ENCODE measurements at regions of chr1 and their contacts with region 1.

Region 1: GRCh38 chr1:100132566-100133477 is at the starts of genes SASS6 and TRMT13:
- DNase-seq: peak; percentile 94
- H3K4me3 Mint-ChIP-seq: peak within 1 kb of the TSS; percentile 97
- H3K27ac Mint-ChIP-seq: peak within 1 kb of the TSS; percentile 93
- H3K4me1 Mint-ChIP-seq: peaks cover 31% of the 10 kb centered on the region
- H3K27me3 Mint-ChIP-seq: no peaks in the 10 kb centered on the region
- total RNA-seq, gene SASS6: 15.2 and 15.7 TPM in 2 replicates
- total RNA-seq, gene TRMT13: 20.2 and 24.6 TPM in 2 replicates

Region 2: GRCh38 chr1:99849744-99850458 is 282.9 kb before region 1 on chr1 and contains the start of gene AGL:
- intact Hi-C with region 1: loop called (anchors 5 kb)
- DNase-seq: peak; percentile 81
- H3K4me3 Mint-ChIP-seq: peak within 1 kb of the TSS; percentile 96
- H3K27ac Mint-ChIP-seq: peak within 1 kb of the TSS; percentile 80
- H3K4me1 Mint-ChIP-seq: peaks cover 23% of the 10 kb centered on the region
- H3K27me3 Mint-ChIP-seq: no peaks in the 10 kb centered on the region
- total RNA-seq, gene AGL: 13.2 and 13.8 TPM in 2 replicates

Region 3: GRCh38 chr1:100037927-100038659 is 94.7 kb before region 1 on chr1:
- intact Hi-C with region 1: loop called (anchors 1 kb)
- DNase-seq: peak; percentile 86
- H3K4me3 Mint-ChIP-seq: peak overlapping the region; percentile 98
- H3K27ac Mint-ChIP-seq: peak overlapping the region; percentile 99
- H3K4me1 Mint-ChIP-seq: peaks cover 50% of the 10 kb centered on the region
- H3K27me3 Mint-ChIP-seq: no peaks in the 10 kb centered on the region

Region 4: GRCh38 chr1:100249537-100250257 is 116.9 kb after region 1 on chr1 and contains the start of gene DBT:
- intact Hi-C with region 1: loop called (anchors 5 kb)
- DNase-seq: peak; percentile 91
- H3K4me3 Mint-ChIP-seq: no peak within 1 kb of the TSS
- H3K27ac Mint-ChIP-seq: no peak within 1 kb of the TSS
- H3K4me1 Mint-ChIP-seq: peaks cover 9% of the 10 kb centered on the region
- H3K27me3 Mint-ChIP-seq: peaks cover 6% of the 10 kb centered on the region
- total RNA-seq, gene DBT: 10.4 and 10.7 TPM in 2 replicates

Region 5: GRCh38 chr1:100351095-100351891 is 218.5 kb after region 1 on chr1:
- intact Hi-C with region 1: loop called (anchors 1 kb)
- DNase-seq: peak; percentile 84
- H3K4me3 Mint-ChIP-seq: peak overlapping the region; percentile 87
- H3K27ac Mint-ChIP-seq: peak overlapping the region; percentile 89
- H3K4me1 Mint-ChIP-seq: peaks cover 35% of the 10 kb centered on the region
- H3K27me3 Mint-ChIP-seq: peaks cover 4% of the 10 kb centered on the region

Region 6: GRCh38 chr1:100459358-100460114 is 326.7 kb after region 1 on chr1:
- intact Hi-C with region 1: loop called (anchors 1 kb)
- DNase-seq: peak; percentile 58
- H3K4me3 Mint-ChIP-seq: no peak overlapping the region
- H3K27ac Mint-ChIP-seq: no peak overlapping the region
- H3K4me1 Mint-ChIP-seq: peaks cover 34% of the 10 kb centered on the region
- H3K27me3 Mint-ChIP-seq: no peaks in the 10 kb centered on the region